Aorta (tissue), 5 donors: ENCODE measurements at regions of chr4 and their contacts with region 1.

Region 1: GRCh38 chr4:150714462-150715438 is 132.8 kb downstream of the MAB21L2 start:
- DNase-seq: no peak
- ATAC-seq: no peak
- H3K4me3 ChIP-seq: no peak overlapping the region
- H3K27ac ChIP-seq: no peak overlapping the region
- H3K4me1 ChIP-seq: no peaks in the 10 kb centered on the region
- H3K27me3 ChIP-seq: no peaks in the 10 kb centered on the region

Region 2: GRCh38 chr4:150679765-150680343 is 34.9 kb before region 1 on chr4:
- intact Hi-C with region 1: no loop called
- DNase-seq: no peak
- ATAC-seq: no peak
- H3K4me3 ChIP-seq: no peak overlapping the region
- H3K27ac ChIP-seq: no peak overlapping the region
- H3K4me1 ChIP-seq: no peaks in the 10 kb centered on the region
- H3K27me3 ChIP-seq: no peaks in the 10 kb centered on the region

Region 3: GRCh38 chr4:150852216-150852615 is 137.5 kb after region 1 on chr4:
- intact Hi-C with region 1: loop called in 1 of 2 experiments (anchors 5 kb)
- DNase-seq: no peak
- ATAC-seq: no peak
- H3K4me3 ChIP-seq: no peak overlapping the region
- H3K27ac ChIP-seq: no peak overlapping the region
- H3K4me1 ChIP-seq: no peaks in the 10 kb centered on the region
- H3K27me3 ChIP-seq: no peaks in the 10 kb centered on the region